ENCODE measurements at regions of chr10 and their contacts with region 1.

Region 1: GRCh38 chr10:3623746-3624145 is 161.3 kb downstream of the KLF6 start:
- DNase-seq: peak; percentile 92
- H3K4me3 ChIP-seq: peak overlapping the region; percentile 57
- H3K27ac ChIP-seq: peak overlapping the region; percentile 94
- H3K4me1 ChIP-seq: peaks cover 69% of the 10 kb centered on the region
- CTCF ChIP-seq: no peak

Region 2: DNA sequence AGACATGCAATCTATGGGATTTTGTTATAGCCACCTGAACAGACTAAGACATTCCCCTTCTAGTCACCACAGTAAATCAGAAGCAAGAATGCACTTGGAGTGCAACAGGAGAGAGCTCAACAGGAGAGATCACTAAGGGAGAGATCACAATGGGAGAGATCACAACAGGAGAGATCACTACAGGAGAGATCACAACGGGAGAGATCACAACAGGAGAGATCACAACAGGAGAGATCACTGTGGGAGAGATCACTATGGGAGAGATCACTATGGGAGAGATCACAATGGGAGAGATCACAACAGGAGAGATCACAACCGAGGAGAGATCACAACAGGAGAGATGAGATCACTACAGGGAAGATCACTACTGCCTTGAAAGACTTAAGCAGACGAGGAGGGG is 212.7 kb before region 1 on chr10:
- CTCF ChIA-PET with region 1: no interaction called
- POLR2A ChIA-PET with region 1: no interaction called
- intact Hi-C with region 1: no loop called
- DNase-seq: no peak
- H3K4me3 ChIP-seq: no peak overlapping the region
- H3K27ac ChIP-seq: no peak overlapping the region
- H3K4me1 ChIP-seq: no peaks in the 10 kb centered on the region
- CTCF ChIP-seq: no peak

Region 3: DNA sequence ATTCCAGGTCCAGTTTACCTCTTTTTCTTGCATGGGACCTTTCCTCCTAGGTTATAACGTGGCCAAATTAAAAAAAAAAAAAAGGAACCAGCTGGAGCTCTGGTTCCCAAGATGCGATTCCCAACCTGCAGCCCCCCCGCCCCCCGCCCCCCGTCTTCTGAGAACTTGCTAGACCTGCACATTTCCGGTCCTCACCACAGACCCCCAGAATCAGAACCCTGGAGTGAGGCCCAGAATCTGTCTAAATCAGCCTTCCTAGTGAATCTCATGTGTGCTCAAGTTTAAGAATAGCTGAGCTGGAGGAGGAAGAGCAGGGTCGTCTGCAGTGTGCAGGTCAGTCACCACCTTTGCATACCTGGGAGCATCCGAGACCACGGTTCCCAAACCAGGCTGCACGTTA is 17.1 kb after region 1 on chr10:
- CTCF ChIA-PET with region 1: no interaction called
- POLR2A ChIA-PET with region 1: interaction called, 10 read pairs
- intact Hi-C with region 1: no loop called
- DNase-seq: no peak
- H3K4me3 ChIP-seq: no peak overlapping the region
- H3K27ac ChIP-seq: no peak overlapping the region
- H3K4me1 ChIP-seq: no peaks in the 10 kb centered on the region
- CTCF ChIP-seq: no peak

Region 4: DNA sequence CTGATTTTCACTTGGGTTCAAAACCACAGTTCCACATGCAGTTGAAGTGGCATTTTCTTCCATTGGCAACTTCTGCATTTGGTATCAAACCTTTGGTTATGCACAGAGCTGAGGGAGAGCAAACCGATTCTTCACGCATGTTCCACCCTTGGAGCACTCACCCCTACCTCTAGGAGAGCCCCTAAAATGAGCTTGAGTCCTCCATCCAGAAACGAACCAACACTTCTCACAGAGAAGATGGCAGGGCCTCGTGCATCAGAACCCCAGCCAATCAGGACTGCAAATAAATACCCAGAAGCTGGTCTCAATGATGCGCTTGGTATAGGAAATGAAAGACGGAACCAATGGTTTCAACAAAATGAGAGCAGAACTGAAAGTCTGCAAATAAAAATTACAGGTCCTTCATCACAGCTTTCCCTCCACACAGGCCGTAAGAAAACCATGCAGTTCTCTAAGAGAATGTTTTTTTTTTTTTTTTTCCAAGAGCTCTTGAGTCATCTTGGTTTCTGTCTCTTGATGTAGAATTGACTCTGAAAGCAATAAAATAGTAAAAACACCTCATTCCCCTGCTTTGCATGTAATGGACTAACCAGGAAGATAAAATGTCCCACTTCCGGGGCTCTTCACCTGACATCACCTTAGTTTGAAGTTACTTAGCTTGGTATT is 137.4 kb after region 1 on chr10:
- CTCF ChIA-PET with region 1: interaction called, 3 read pairs
- POLR2A ChIA-PET with region 1: interaction called, 3 read pairs
- intact Hi-C with region 1: loop called (anchors 5 kb)
- DNase-seq: peak; percentile 46
- H3K4me3 ChIP-seq: no peak overlapping the region
- H3K27ac ChIP-seq: peak overlapping the region; percentile 43
- H3K4me1 ChIP-seq: peaks cover 49% of the 10 kb centered on the region
- CTCF ChIP-seq: no peak

Region 5: DNA sequence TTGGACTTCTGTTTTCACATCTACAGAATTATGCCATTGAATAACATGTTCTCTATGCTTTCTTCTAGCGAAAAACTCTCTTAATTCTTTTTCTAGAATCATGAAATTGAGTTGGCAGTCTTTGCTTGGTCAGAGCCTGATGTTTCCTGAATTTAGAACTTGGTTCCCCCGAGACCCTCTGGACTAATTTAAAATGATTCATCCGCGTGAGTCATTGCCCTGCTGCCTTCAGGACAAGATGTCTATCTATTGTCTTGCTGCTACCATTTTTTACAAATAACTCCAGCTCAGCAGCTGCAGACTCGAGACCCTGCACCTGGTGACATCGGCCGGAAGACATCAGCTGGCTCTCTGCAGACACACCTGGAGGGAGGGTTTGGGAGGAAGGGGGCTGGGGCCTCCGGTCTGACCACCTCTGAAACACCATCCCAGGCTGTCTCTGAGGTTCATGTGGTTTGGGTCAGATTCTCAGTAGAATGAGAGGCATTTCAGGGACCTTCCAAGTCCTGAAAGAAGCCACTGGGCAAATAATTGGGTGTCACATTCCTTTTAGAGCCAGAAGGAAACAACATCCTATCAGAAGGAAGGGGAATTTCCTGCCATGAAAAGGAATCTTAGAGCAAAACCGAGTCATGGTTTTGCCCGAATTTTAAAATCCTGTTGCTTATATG is 182.2 kb after region 1 on chr10:
- CTCF ChIA-PET with region 1: no interaction called
- POLR2A ChIA-PET with region 1: interaction called, 3 read pairs
- intact Hi-C with region 1: loop called (anchors 2 kb)
- DNase-seq: peak; percentile 93
- H3K4me3 ChIP-seq: peak overlapping the region; percentile 61
- H3K27ac ChIP-seq: peak overlapping the region; percentile 98
- H3K4me1 ChIP-seq: peaks cover 83% of the 10 kb centered on the region
- CTCF ChIP-seq: no peak

Region 6: GRCh38 chr10:3873728-3874461 is 250.1 kb after region 1 on chr10:
- CTCF ChIA-PET with region 1: interaction called, 3 read pairs
- POLR2A ChIA-PET with region 1: no interaction called
- intact Hi-C with region 1: loop called (anchors 5 kb)
- DNase-seq: peak; percentile 89
- H3K4me3 ChIP-seq: peak overlapping the region; percentile 14
- H3K27ac ChIP-seq: no peak overlapping the region
- H3K4me1 ChIP-seq: peaks cover 50% of the 10 kb centered on the region
- CTCF ChIP-seq: no peak

Measured in OCI-LY7 (cell line).